Caco-2 (cell line): ENCODE measurements at regions of chr7 and their contacts with region 1.

Region 1: GRCh38 chr7:518630-519483 is 789 bp downstream of the PDGFA start:
- DNase-seq: peak; percentile 88
- H3K4me3 ChIP-seq: peak overlapping the region; percentile 98
- H3K4me3 Mint-ChIP-seq: peak overlapping the region; percentile 89
- H3K27ac Mint-ChIP-seq: peak overlapping the region; percentile 89
- H3K4me1 ChIP-seq: peaks cover 37% of the 10 kb centered on the region
- H3K4me1 Mint-ChIP-seq: peaks cover 6% of the 10 kb centered on the region
- H3K27me3 ChIP-seq: peaks cover 1% of the 10 kb centered on the region; the same call in 1 of the 2 replicates
- H3K27me3 Mint-ChIP-seq: no peaks in the 10 kb centered on the region
- CTCF ChIP-seq: no peak

Region 2: DNA sequence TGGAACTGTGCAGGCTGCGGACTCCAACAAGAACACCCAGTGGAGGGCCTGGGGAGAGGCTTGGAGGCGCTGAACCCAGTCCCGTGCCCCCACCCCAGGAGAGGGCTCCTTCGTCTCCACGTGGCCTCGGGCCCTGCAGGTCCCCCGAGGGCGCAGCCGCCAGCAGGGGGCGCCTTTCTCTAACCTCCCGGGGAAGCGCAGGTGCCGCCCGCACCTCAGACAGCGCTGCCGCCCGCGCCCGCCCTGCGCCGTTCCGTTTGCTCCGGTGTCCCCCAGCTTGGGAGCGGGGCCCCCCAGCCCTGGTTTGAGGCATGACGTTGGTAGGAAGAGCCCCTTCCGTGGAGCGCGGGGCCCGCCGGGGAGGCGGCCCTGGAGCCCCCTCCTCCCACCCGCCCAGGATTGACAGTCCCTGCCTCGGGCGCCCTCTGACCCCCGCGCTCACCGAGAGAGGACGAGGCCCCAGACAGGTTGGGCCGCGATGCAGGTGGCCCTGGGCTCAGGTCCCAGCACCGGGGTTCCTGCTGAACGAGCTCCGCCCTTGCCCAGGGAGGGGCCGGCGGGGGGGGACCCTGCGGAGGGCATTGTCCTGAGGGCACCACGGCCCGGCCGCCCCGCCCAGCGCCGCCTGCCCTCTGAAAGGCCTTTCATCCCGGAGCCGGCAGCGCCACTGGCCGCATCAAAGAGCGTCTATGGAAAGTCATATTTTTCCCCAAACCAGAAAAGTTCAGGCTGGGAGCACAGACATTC is 186.0 kb before region 1 on chr7:
- CTCF ChIA-PET with region 1: interaction called, 9 read pairs
- POLR2A ChIA-PET with region 1: interaction called, 4 read pairs
- intact Hi-C with region 1: loop called (anchors 2 kb)
- DNase-seq: peak; percentile 88 to 96
- H3K4me3 ChIP-seq: peak overlapping the region; percentile 46
- H3K4me3 Mint-ChIP-seq: peak overlapping the region; percentile 67
- H3K27ac Mint-ChIP-seq: peak overlapping the region; percentile 72
- H3K4me1 ChIP-seq: peaks cover 30% of the 10 kb centered on the region
- H3K4me1 Mint-ChIP-seq: peaks cover 35% of the 10 kb centered on the region
- H3K27me3 ChIP-seq: no peaks in the 10 kb centered on the region
- H3K27me3 Mint-ChIP-seq: no peaks in the 10 kb centered on the region
- CTCF ChIP-seq: peak; percentile 94 to 95

Region 3: GRCh38 chr7:371119-371778 is 147.6 kb before region 1 on chr7:
- CTCF ChIA-PET with region 1: interaction called, 3 read pairs
- POLR2A ChIA-PET with region 1: no interaction called
- intact Hi-C with region 1: loop called (anchors 5 kb)
- DNase-seq: peak; percentile 59 to 84
- H3K4me3 ChIP-seq: no peak overlapping the region
- H3K4me3 Mint-ChIP-seq: peak overlapping the region; percentile 16
- H3K27ac Mint-ChIP-seq: peak overlapping the region; percentile 99
- H3K4me1 ChIP-seq: peaks cover 72% of the 10 kb centered on the region
- H3K4me1 Mint-ChIP-seq: peaks cover 43% of the 10 kb centered on the region
- H3K27me3 ChIP-seq: no peaks in the 10 kb centered on the region
- H3K27me3 Mint-ChIP-seq: no peaks in the 10 kb centered on the region
- CTCF ChIP-seq: no peak

Region 4: DNA sequence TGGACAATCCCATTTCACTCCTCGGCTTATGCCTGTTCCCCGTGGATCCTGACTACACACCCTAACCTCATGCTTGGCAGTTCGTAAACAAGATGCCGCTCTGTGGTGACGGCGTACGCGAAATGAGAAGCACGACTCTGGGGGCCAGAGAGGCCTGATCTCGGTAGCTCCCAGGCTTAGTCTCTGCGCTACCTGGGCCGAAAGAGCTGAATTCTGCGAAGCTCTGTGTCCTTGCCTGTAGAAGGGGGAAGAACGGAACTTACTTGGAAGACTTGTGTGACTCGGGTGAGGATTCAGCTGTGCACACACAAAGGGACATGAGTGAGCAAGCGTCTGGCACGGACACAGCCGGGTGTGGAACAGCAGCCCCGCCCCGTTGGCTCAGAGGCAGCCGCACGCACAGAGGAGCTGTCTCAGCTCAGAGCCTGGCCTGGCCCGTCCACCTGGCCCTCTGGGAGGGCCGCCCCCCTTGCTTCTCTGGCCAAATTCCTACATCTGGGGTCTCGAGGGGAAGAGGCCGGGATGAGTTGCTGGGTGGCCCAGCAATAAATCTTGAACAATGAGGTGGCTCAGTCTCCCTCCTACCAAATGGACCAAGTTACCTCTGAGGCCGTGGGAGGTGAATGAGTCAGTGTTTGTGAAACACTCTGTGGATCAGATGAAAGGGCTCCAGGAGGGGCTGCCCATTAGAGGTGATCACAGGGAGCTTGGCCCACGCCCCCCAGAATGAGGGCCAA is 83.1 kb before region 1 on chr7:
- CTCF ChIA-PET with region 1: interaction called, 5 read pairs
- POLR2A ChIA-PET with region 1: no interaction called
- intact Hi-C with region 1: loop called (anchors 5 kb)
- DNase-seq: peak in 1 of 2 experiments; percentile 34
- H3K4me3 ChIP-seq: no peak overlapping the region
- H3K4me3 Mint-ChIP-seq: peak overlapping the region; percentile 66
- H3K27ac Mint-ChIP-seq: peak overlapping the region; percentile 90
- H3K4me1 ChIP-seq: peaks cover 40% of the 10 kb centered on the region
- H3K4me1 Mint-ChIP-seq: peaks cover 20% of the 10 kb centered on the region
- H3K27me3 ChIP-seq: no peaks in the 10 kb centered on the region
- H3K27me3 Mint-ChIP-seq: no peaks in the 10 kb centered on the region
- CTCF ChIP-seq: no peak

Region 5: GRCh38 chr7:490461-491291 is 28.2 kb before region 1 on chr7:
- CTCF ChIA-PET with region 1: no interaction called
- POLR2A ChIA-PET with region 1: no interaction called
- intact Hi-C with region 1: no loop called
- DNase-seq: no peak
- H3K4me3 ChIP-seq: no peak overlapping the region
- H3K4me3 Mint-ChIP-seq: no peak overlapping the region
- H3K27ac Mint-ChIP-seq: no peak overlapping the region
- H3K4me1 ChIP-seq: peaks cover 17% of the 10 kb centered on the region
- H3K4me1 Mint-ChIP-seq: peaks cover 4% of the 10 kb centered on the region
- H3K27me3 ChIP-seq: no peaks in the 10 kb centered on the region
- H3K27me3 Mint-ChIP-seq: no peaks in the 10 kb centered on the region
- CTCF ChIP-seq: no peak

Region 6: DNA sequence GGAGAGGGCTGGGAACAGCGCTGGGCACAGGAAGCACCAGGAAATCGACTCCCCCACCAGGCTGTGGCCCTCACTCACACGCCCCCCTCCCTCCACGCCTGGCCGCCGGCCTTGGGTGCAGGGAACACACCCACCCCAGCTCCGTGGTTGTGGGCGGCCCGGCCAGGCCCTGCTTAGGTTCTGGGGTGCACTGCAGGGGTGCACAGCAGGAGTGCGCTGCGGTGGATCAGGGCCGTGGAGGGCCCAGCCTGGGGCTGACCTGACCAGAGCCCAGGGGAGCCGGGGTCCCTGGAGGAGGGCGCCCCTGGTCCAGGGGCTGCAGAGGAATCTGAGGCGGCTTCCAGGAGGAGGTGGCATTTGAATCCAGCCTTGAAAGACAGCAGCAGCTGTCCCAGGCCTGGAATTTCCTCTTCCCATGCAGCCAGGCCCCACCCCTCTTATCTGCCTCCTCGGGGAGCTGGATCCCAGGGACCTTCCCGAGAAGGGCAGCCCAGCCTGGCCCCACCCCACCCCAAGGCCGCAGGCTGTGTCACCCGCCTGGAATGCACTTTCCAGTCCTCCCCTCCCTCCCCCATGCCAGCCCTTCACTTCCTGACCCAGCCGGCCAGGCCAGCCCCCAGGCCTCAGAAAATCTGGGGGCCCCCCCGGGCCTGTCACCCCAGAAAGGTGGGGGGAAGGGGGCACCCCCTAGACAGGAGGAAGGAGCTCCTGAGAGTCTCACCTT is 19.2 kb after region 1 on chr7:
- CTCF ChIA-PET with region 1: interaction called, 4 read pairs
- POLR2A ChIA-PET with region 1: interaction called, 3 read pairs
- intact Hi-C with region 1: loop called (anchors 2 kb)
- DNase-seq: peak; percentile 95 to 98
- H3K4me3 ChIP-seq: no peak overlapping the region; the same call in 1 of the 2 replicates
- H3K4me3 Mint-ChIP-seq: peak overlapping the region; percentile 68
- H3K27ac Mint-ChIP-seq: peak overlapping the region; percentile 97
- H3K4me1 ChIP-seq: peaks cover 47% of the 10 kb centered on the region
- H3K4me1 Mint-ChIP-seq: peaks cover 28% of the 10 kb centered on the region
- H3K27me3 ChIP-seq: no peaks in the 10 kb centered on the region
- H3K27me3 Mint-ChIP-seq: no peaks in the 10 kb centered on the region
- CTCF ChIP-seq: no peak

Region 7: GRCh38 chr7:557558-557881 is 38.7 kb after region 1 on chr7:
- CTCF ChIA-PET with region 1: no interaction called
- POLR2A ChIA-PET with region 1: no interaction called
- intact Hi-C with region 1: no loop called
- DNase-seq: no peak
- H3K4me3 ChIP-seq: no peak overlapping the region
- H3K4me3 Mint-ChIP-seq: no peak overlapping the region
- H3K27ac Mint-ChIP-seq: no peak overlapping the region
- H3K4me1 ChIP-seq: no peaks in the 10 kb centered on the region
- H3K4me1 Mint-ChIP-seq: no peaks in the 10 kb centered on the region
- H3K27me3 ChIP-seq: no peaks in the 10 kb centered on the region
- H3K27me3 Mint-ChIP-seq: no peaks in the 10 kb centered on the region
- CTCF ChIP-seq: no peak

Region 8: GRCh38 chr7:568031-568951 is 49.4 kb after region 1 on chr7:
- CTCF ChIA-PET with region 1: no interaction called
- POLR2A ChIA-PET with region 1: no interaction called
- intact Hi-C with region 1: no loop called
- DNase-seq: no peak
- H3K4me3 ChIP-seq: no peak overlapping the region
- H3K4me3 Mint-ChIP-seq: no peak overlapping the region
- H3K27ac Mint-ChIP-seq: no peak overlapping the region
- H3K4me1 ChIP-seq: no peaks in the 10 kb centered on the region
- H3K4me1 Mint-ChIP-seq: no peaks in the 10 kb centered on the region
- H3K27me3 ChIP-seq: no peaks in the 10 kb centered on the region
- H3K27me3 Mint-ChIP-seq: no peaks in the 10 kb centered on the region
- CTCF ChIP-seq: no peak

Region 9: GRCh38 chr7:584122-584465 is 65.2 kb after region 1 on chr7:
- CTCF ChIA-PET with region 1: no interaction called
- POLR2A ChIA-PET with region 1: no interaction called
- intact Hi-C with region 1: no loop called
- DNase-seq: no peak
- H3K4me3 ChIP-seq: no peak overlapping the region
- H3K4me3 Mint-ChIP-seq: no peak overlapping the region
- H3K27ac Mint-ChIP-seq: peak overlapping the region; percentile 15
- H3K4me1 ChIP-seq: peaks cover 12% of the 10 kb centered on the region
- H3K4me1 Mint-ChIP-seq: no peaks in the 10 kb centered on the region
- H3K27me3 ChIP-seq: no peaks in the 10 kb centered on the region
- H3K27me3 Mint-ChIP-seq: no peaks in the 10 kb centered on the region
- CTCF ChIP-seq: no peak